Pancreas (tissue), 10 donors: ENCODE measurements at regions of chr2 and their contacts with region 1.

Region 1: DNA sequence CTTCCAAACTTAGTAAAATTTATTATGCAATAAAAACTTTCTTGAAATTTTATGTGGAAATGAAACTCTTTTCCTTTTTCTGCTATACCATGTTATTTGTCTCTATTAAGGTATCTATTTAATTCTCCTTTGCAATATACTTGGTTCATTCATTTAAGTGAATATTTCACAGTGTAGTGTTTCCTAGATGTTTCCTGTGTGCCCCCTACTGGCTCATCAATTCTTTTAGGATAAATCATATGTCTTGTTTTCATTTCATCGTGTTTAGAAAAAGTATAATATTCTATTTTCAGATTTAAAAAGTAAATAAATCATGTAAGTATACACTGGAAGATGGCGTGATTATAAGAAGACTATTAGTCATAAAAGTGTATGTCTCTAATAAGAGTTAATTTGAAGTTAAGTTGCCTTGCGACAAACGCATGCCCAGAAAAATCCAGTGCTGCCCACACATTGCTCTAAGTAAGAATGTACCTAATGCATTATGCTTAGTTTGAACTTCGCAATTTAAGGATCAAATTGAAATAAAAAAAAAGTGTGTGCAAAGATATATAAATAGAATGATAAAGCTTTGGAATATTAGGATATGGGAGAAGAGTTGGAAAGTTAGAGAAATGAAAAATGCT is 525.4 kb downstream of the KCNJ3 start:
- DNase-seq: no peak
- ATAC-seq: peak in 1 of 4 donors; percentile 30
- H3K4me3 ChIP-seq: no peak overlapping the region
- H3K27ac ChIP-seq: no peak overlapping the region
- H3K4me1 ChIP-seq: no peaks in the 10 kb centered on the region
- H3K27me3 ChIP-seq: no peaks in the 10 kb centered on the region
- CTCF ChIP-seq: peak in 2 of 4 donors; percentile 21 to 29

Region 2: GRCh38 chr2:154623819-154624218 is 600.1 kb before region 1 on chr2:
- intact Hi-C with region 1: loop called in 1 of 3 experiments (anchors 5 kb)
- DNase-seq: peak in 3 of 6 donors; percentile 12 to 55 (median 20)
- ATAC-seq: peak; percentile 60 to 87 (median 86)
- H3K4me3 ChIP-seq: no peak overlapping the region
- H3K27ac ChIP-seq: no peak overlapping the region
- H3K4me1 ChIP-seq: no peaks in the 10 kb centered on the region
- H3K27me3 ChIP-seq: no peaks in the 10 kb centered on the region
- CTCF ChIP-seq: peak in 3 of 4 donors; percentile 23 to 55 (median 40)

Region 3: DNA sequence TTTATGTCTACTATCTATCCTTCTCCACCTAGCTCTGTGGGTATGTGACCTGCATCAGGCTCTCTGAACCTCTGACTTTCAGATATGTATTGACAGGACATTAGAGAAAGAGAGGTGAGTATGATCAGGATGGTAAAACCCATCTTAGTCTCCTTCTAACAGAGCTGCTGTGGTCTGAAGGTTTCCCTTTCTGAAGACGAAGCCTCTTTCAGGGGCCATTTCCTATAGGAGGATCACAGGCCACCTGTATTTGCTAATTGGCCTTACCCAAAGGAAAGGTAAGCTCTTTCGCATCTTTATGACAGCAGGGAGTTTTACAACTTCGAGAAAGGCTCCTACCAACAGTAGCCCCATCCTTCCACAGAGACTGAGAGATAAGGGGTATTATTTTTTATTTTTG is 82.5 kb before region 1 on chr2:
- intact Hi-C with region 1: no loop called
- DNase-seq: no peak
- ATAC-seq: no peak
- H3K4me3 ChIP-seq: no peak overlapping the region
- H3K27ac ChIP-seq: no peak overlapping the region
- H3K4me1 ChIP-seq: peaks cover 0 to 6% (median 0%) of the 10 kb centered on the region in 3 donors
- H3K27me3 ChIP-seq: no peaks in the 10 kb centered on the region
- CTCF ChIP-seq: no peak